Naive thymus-derived CD4-positive, alpha-beta T cell (primary cell): ENCODE measurements at regions of chr10 and their contacts with region 1.

Region 1: GRCh38 chr10:93702211-93703001 is at the start of gene FRA10AC1:
- DNase-seq: peak; percentile 77 to 92 (median 85)
- ATAC-seq: peak; percentile 97
- H3K4me3 ChIP-seq: peak within 1 kb of the TSS; percentile 85
- H3K4me3 Mint-ChIP-seq: no peak within 1 kb of the TSS
- H3K27ac ChIP-seq: peak within 1 kb of the TSS; percentile 73
- H3K27ac Mint-ChIP-seq: no peak within 1 kb of the TSS
- H3K4me1 ChIP-seq: peaks cover 9 to 16% of the 10 kb centered on the region in 2 donors
- H3K4me1 Mint-ChIP-seq: peaks cover 8 to 29% (median 11%) of the 10 kb centered on the region in 7 donors
- H3K27me3 ChIP-seq: no peaks in the 10 kb centered on the region
- H3K27me3 Mint-ChIP-seq: no peaks in the 10 kb centered on the region
- total RNA-seq, gene FRA10AC1: 15.5 to 31.0 (median 22.7) TPM

Region 2: GRCh38 chr10:93330824-93331223 is 371.6 kb before region 1 on chr10:
- CTCF ChIA-PET with region 1: no interaction called
- POLR2A ChIA-PET with region 1: no interaction called
- intact Hi-C with region 1: no loop called
- DNase-seq: no peak
- ATAC-seq: no peak
- H3K4me3 ChIP-seq: no peak overlapping the region
- H3K4me3 Mint-ChIP-seq: no peak overlapping the region
- H3K27ac ChIP-seq: no peak overlapping the region
- H3K27ac Mint-ChIP-seq: no peak overlapping the region
- H3K4me1 ChIP-seq: no peaks in the 10 kb centered on the region
- H3K4me1 Mint-ChIP-seq: no peaks in the 10 kb centered on the region
- H3K27me3 ChIP-seq: no peaks in the 10 kb centered on the region
- H3K27me3 Mint-ChIP-seq: peaks cover 0 to 23% (median 0%) of the 10 kb centered on the region in 5 donors

Region 3: GRCh38 chr10:93376372-93377293 is 325.8 kb before region 1 on chr10:
- CTCF ChIA-PET with region 1: no interaction called
- POLR2A ChIA-PET with region 1: no interaction called
- intact Hi-C with region 1: loop called in 1 of 2 experiments (anchors 10 kb)
- DNase-seq: peak in 8 of 9 donors; percentile 37 to 78 (median 68)
- ATAC-seq: peak; percentile 89
- H3K4me3 ChIP-seq: no peak overlapping the region
- H3K4me3 Mint-ChIP-seq: no peak overlapping the region
- H3K27ac ChIP-seq: no peak overlapping the region
- H3K27ac Mint-ChIP-seq: no peak overlapping the region
- H3K4me1 ChIP-seq: peaks cover 0 to 4% of the 10 kb centered on the region in 2 donors
- H3K4me1 Mint-ChIP-seq: peaks cover 0 to 23% (median 0%) of the 10 kb centered on the region in 7 donors
- H3K27me3 ChIP-seq: no peaks in the 10 kb centered on the region
- H3K27me3 Mint-ChIP-seq: peaks cover 0 to 10% (median 3%) of the 10 kb centered on the region in 5 donors

Region 4: DNA sequence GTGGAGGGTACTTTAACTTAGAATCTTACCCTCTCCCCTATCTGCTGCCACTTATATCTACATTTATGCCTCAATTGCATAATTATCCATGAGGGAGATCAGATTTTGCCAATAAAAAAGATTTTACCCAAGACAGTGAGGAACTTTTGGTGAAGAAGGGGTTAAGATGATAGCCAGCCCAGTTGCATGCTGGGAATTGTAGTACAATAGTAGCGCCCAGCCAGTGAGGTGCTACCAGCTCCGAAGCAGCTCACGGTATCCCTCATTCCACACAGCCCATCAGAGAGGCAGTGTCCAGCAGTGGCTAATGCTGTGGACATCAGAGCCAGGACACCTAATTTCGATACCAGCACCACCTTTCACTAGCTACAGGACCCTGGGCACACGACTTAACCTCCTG is 49.4 kb after region 1 on chr10:
- CTCF ChIA-PET with region 1: no interaction called
- POLR2A ChIA-PET with region 1: interaction called, 3 read pairs
- intact Hi-C with region 1: loop called in 1 of 2 experiments (anchors 1 kb)
- DNase-seq: peak in 5 of 9 donors; percentile 5 to 9 (median 7)
- ATAC-seq: peak; percentile 60
- H3K4me3 ChIP-seq: peak overlapping the region; percentile 32
- H3K4me3 Mint-ChIP-seq: peak overlapping the region in 9 of 10 donors; percentile 32 to 78 (median 60)
- H3K27ac ChIP-seq: no peak overlapping the region
- H3K27ac Mint-ChIP-seq: no peak overlapping the region
- H3K4me1 ChIP-seq: no peaks in the 10 kb centered on the region
- H3K4me1 Mint-ChIP-seq: peaks cover 0 to 9% (median 8%) of the 10 kb centered on the region in 7 donors
- H3K27me3 ChIP-seq: no peaks in the 10 kb centered on the region
- H3K27me3 Mint-ChIP-seq: peaks cover 7 to 22% (median 19%) of the 10 kb centered on the region in 5 donors

Region 5: DNA sequence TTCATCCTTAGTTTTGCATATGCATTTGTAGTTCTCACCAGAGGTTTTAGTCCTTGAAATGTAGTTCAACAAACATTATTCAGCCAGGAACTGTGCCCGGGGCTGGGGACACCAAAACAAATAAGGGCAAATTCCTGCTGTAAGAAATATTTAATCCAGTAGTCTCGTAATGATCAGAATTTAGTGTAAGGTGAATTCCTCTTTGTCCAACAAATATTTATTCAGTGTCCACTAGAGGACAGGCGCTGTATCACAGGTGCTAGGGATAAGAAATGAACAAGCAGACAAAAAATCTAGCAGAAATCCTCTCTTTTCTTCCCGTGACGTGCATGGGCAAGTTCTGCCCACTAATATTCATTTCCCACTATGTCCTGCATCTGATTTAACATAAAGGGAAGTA is 73.0 kb after region 1 on chr10:
- CTCF ChIA-PET with region 1: no interaction called
- POLR2A ChIA-PET with region 1: no interaction called
- intact Hi-C with region 1: no loop called
- DNase-seq: no peak
- ATAC-seq: no peak
- H3K4me3 ChIP-seq: no peak overlapping the region
- H3K4me3 Mint-ChIP-seq: no peak overlapping the region
- H3K27ac ChIP-seq: no peak overlapping the region
- H3K27ac Mint-ChIP-seq: no peak overlapping the region
- H3K4me1 ChIP-seq: no peaks in the 10 kb centered on the region
- H3K4me1 Mint-ChIP-seq: no peaks in the 10 kb centered on the region
- H3K27me3 ChIP-seq: no peaks in the 10 kb centered on the region
- H3K27me3 Mint-ChIP-seq: peaks cover 3 to 28% (median 25%) of the 10 kb centered on the region in 5 donors

Region 6: GRCh38 chr10:93893646-93894515 is 191.5 kb after region 1 on chr10 and contains the start of gene SLC35G1:
- CTCF ChIA-PET with region 1: no interaction called
- POLR2A ChIA-PET with region 1: interaction called, 6 read pairs
- intact Hi-C with region 1: loop called (anchors 1 to 2 kb)
- DNase-seq: peak; percentile 48 to 75 (median 66)
- ATAC-seq: peak; percentile 89
- H3K4me3 ChIP-seq: peak within 1 kb of the TSS; percentile 72
- H3K4me3 Mint-ChIP-seq: peak within 1 kb of the TSS; percentile 81 to 91 (median 86)
- H3K27ac ChIP-seq: peak within 1 kb of the TSS; percentile 62
- H3K27ac Mint-ChIP-seq: peak within 1 kb of the TSS; percentile 56 to 81 (median 74)
- H3K4me1 ChIP-seq: peaks cover 6 to 18% of the 10 kb centered on the region in 2 donors
- H3K4me1 Mint-ChIP-seq: peaks cover 23 to 47% (median 40%) of the 10 kb centered on the region in 7 donors
- H3K27me3 ChIP-seq: no peaks in the 10 kb centered on the region
- H3K27me3 Mint-ChIP-seq: peaks cover 0 to 9% (median 7%) of the 10 kb centered on the region in 5 donors
- total RNA-seq, gene SLC35G1: 2.4 to 7.2 (median 3.5) TPM

Region 7: DNA sequence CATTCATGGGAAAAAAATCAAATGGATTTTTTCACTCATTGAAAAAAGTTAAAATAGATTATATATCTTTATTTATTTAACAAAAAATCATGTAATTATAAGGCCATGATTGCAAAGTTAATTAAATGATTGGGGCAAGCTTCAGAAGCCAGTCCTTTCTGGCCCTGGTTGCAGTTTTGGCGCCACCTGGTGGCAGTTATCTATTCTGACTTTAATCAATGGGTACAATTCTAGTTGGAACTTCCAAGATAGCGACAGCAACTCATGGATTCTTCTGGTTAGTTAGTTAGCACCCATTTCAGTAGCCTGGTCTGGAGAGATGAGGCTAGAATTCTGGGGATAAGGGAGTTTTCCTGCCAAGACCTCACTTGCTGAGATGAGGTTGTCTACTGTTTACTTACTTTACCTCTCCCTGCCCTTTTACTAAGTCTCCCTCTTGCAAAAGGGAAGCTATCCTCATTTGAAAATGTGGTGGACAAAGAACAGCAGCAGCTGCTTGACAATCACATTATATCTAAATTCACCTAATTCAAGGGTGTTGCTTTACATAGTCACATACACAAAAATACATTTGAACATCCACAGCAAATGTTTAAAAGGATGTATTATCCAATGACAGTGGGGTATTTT is 618.0 kb after region 1 on chr10:
- CTCF ChIA-PET with region 1: no interaction called
- POLR2A ChIA-PET with region 1: no interaction called
- intact Hi-C with region 1: loop called in 1 of 2 experiments (anchors 2 kb)
- DNase-seq: peak; percentile 15 to 57 (median 40)
- ATAC-seq: peak; percentile 41
- H3K4me3 ChIP-seq: no peak overlapping the region
- H3K4me3 Mint-ChIP-seq: no peak overlapping the region
- H3K27ac ChIP-seq: no peak overlapping the region
- H3K27ac Mint-ChIP-seq: peak overlapping the region in 1 of 9 donors; percentile 19
- H3K4me1 ChIP-seq: no peaks in the 10 kb centered on the region
- H3K4me1 Mint-ChIP-seq: no peaks in the 10 kb centered on the region
- H3K27me3 ChIP-seq: no peaks in the 10 kb centered on the region
- H3K27me3 Mint-ChIP-seq: no peaks in the 10 kb centered on the region

Region 8: GRCh38 chr10:94545391-94546048 is 843.1 kb after region 1 on chr10 and contains the start of gene HELLS:
- CTCF ChIA-PET with region 1: no interaction called
- POLR2A ChIA-PET with region 1: no interaction called
- intact Hi-C with region 1: loop called (anchors 5 to 10 kb)
- DNase-seq: peak; percentile 30 to 76 (median 63)
- ATAC-seq: peak; percentile 75
- H3K4me3 ChIP-seq: peak within 1 kb of the TSS; percentile 71
- H3K4me3 Mint-ChIP-seq: peak within 1 kb of the TSS; percentile 89 to 97 (median 94)
- H3K27ac ChIP-seq: peak within 1 kb of the TSS; percentile 63
- H3K27ac Mint-ChIP-seq: peak within 1 kb of the TSS; percentile 75 to 97 (median 87)
- H3K4me1 ChIP-seq: peaks cover 3 to 8% of the 10 kb centered on the region in 2 donors
- H3K4me1 Mint-ChIP-seq: peaks cover 15 to 32% (median 26%) of the 10 kb centered on the region in 7 donors
- H3K27me3 ChIP-seq: no peaks in the 10 kb centered on the region
- H3K27me3 Mint-ChIP-seq: peaks cover 0 to 28% (median 10%) of the 10 kb centered on the region in 5 donors
- total RNA-seq, gene HELLS: 5.4 to 107 (median 7.4) TPM

Region 9: DNA sequence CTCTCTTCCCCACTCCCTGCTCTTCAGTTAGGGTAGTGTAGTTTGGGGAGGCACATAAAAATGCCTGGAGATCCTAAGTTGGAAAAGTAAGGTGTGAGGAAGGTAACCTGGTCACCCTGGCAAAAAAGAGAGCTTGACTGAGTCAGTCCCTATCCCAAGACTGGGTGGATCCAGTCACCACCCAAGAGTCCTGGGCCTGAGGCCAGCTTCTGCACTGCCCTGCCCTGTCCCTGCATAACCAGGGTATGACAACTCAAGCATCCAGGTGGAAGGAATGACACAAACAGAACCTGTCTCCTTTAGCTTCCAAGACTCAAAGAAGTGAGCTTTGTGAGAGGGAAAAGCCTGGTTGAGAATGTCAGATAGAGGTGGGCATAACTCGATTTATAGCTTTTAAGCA is 1885.6 kb after region 1 on chr10:
- CTCF ChIA-PET with region 1: no interaction called
- POLR2A ChIA-PET with region 1: no interaction called
- intact Hi-C with region 1: no loop called
- DNase-seq: no peak
- ATAC-seq: no peak
- H3K4me3 ChIP-seq: no peak overlapping the region
- H3K4me3 Mint-ChIP-seq: no peak overlapping the region
- H3K27ac ChIP-seq: no peak overlapping the region
- H3K27ac Mint-ChIP-seq: no peak overlapping the region
- H3K4me1 ChIP-seq: no peaks in the 10 kb centered on the region
- H3K4me1 Mint-ChIP-seq: no peaks in the 10 kb centered on the region
- H3K27me3 ChIP-seq: no peaks in the 10 kb centered on the region
- H3K27me3 Mint-ChIP-seq: peaks cover 0 to 22% (median 14%) of the 10 kb centered on the region in 5 donors